AG04450 (cell line): ENCODE measurements at regions of chr3 and their contacts with region 1.

Region 1: GRCh38 chr3:95235916-95236315 is 1173.1 kb downstream of the NSUN3 start:
- DNase-seq: no peak
- H3K4me3 ChIP-seq: no peak overlapping the region
- H3K27ac ChIP-seq: no peak overlapping the region
- H3K27me3 ChIP-seq: no peaks in the 10 kb centered on the region
- CTCF ChIP-seq: no peak

Region 2: DNA sequence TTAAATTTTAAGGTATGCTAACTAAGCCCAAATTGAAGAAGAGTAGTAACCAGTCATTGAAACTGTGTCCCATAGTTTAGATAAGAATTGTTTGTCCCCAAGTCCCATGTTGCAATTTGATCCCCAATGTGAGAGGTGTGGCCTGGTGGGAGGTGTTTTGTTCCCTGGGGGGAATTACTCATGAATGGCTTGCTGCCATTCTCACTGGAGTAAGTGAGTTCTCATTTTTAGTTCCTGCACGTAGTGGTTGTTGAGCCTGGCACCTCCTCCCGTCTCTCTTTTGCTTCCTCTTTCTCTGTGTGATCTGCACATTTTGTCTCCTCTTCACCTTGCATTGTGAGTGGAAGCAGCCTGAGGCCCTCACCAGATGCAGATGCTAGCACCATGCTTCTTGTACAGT is 97.9 kb after region 1 on chr3:
- CTCF ChIA-PET with region 1: no interaction called
- POLR2A ChIA-PET with region 1: no interaction called
- DNase-seq: no peak
- H3K4me3 ChIP-seq: no peak overlapping the region
- H3K27ac ChIP-seq: no peak overlapping the region
- H3K27me3 ChIP-seq: no peaks in the 10 kb centered on the region
- CTCF ChIP-seq: no peak

Region 3: DNA sequence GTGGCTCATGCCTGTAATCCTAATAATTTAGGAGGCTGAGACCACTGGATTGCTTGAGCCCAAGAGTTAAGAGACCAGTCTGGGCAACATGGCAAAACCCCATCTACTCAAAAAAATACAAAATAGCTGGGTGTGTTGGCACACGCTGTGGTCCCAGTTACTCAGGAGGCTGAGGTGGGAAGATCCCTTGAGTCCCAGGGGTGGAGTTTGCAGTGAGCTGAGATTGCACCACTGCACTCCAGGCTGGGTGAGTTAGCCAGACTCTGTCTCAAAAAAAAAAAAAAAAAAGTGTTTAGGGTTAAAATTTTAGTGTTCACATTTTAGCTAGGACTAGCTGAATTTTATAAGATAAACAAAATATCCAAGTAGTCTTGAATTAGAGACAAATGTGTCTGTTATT is 238.4 kb after region 1 on chr3:
- CTCF ChIA-PET with region 1: no interaction called
- POLR2A ChIA-PET with region 1: no interaction called
- DNase-seq: no peak
- H3K4me3 ChIP-seq: no peak overlapping the region
- H3K27ac ChIP-seq: no peak overlapping the region
- H3K27me3 ChIP-seq: no peaks in the 10 kb centered on the region
- CTCF ChIP-seq: no peak

Region 4: GRCh38 chr3:97059168-97059567 is 1823.3 kb after region 1 on chr3:
- CTCF ChIA-PET with region 1: interaction called, 10 read pairs
- POLR2A ChIA-PET with region 1: no interaction called
- DNase-seq: no peak
- H3K4me3 ChIP-seq: no peak overlapping the region
- H3K27ac ChIP-seq: no peak overlapping the region
- H3K27me3 ChIP-seq: no peaks in the 10 kb centered on the region
- CTCF ChIP-seq: no peak